Right lobe of liver (tissue), 6 donors: ENCODE measurements at regions of chr10 and their contacts with region 1.

Region 1: DNA sequence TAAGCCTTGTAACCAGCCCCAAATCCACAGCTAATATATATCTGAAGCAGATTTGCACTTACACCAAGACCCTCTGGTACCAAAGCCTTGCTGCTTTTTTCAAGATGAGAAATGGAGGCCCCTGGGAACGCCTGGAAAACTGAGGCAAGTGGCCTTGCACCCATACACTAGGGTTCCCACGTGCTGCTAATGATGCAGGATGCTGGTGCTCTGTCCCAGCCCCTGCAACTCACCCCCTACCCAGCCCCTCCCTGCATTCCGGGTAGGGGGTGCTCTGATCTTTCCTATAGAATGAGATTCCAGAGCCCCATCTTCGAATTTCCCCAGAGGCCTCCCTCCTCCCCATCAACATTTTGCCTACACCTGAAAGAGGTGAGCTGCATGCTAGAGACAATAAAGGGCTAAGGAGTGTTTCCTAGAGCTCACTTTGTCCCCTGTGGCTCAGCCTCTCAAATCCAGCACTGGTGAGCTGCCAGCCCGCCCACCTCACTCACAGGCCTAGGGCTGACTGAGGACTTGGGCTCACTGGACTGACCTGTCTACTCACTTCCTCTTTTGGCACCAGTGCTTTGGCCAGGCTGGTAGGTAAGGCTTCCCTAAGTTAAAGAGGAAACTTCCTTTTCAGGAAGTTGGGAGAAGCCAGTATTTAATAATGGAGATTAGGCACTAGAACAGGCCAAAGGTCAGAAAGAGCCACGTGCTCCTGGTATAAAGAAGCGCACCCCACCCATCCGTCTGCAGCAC is 9.8 kb downstream of the RBP4 start:
- DNase-seq: peak in 2 of 3 donors; percentile 43 to 56
- ATAC-seq: peak; percentile 2 to 50 (median 4)
- H3K4me3 ChIP-seq: no peak overlapping the region
- H3K27ac ChIP-seq: peak overlapping the region in 1 of 3 donors; percentile 40
- H3K4me1 ChIP-seq: peaks cover 0 to 17% (median 0%) of the 10 kb centered on the region in 4 donors
- H3K27me3 ChIP-seq: no peaks in the 10 kb centered on the region
- CTCF ChIP-seq: no peak
- POLR2A ChIP-seq: peak; percentile 5

Region 2: GRCh38 chr10:93672022-93672678 is 80.9 kb after region 1 on chr10:
- intact Hi-C with region 1: loop called in 1 of 2 experiments (anchors 10 kb)
- DNase-seq: peak in 1 of 3 donors; percentile 47
- ATAC-seq: peak; percentile 70 to 85 (median 80)
- H3K4me3 ChIP-seq: peak overlapping the region in 1 of 3 donors; percentile 13
- H3K27ac ChIP-seq: peak overlapping the region; percentile 41 to 72 (median 57)
- H3K4me1 ChIP-seq: peaks cover 0 to 78% (median 29%) of the 10 kb centered on the region in 4 donors
- H3K27me3 ChIP-seq: no peaks in the 10 kb centered on the region
- CTCF ChIP-seq: no peak
- POLR2A ChIP-seq: no peak

Region 3: GRCh38 chr10:93687737-93688136 is 96.5 kb after region 1 on chr10:
- intact Hi-C with region 1: no loop called
- DNase-seq: no peak
- ATAC-seq: no peak
- H3K4me3 ChIP-seq: no peak overlapping the region
- H3K27ac ChIP-seq: no peak overlapping the region
- H3K4me1 ChIP-seq: no peaks in the 10 kb centered on the region
- H3K27me3 ChIP-seq: no peaks in the 10 kb centered on the region
- CTCF ChIP-seq: no peak
- POLR2A ChIP-seq: no peak